ENCODE measurements at regions of chr5 and their contacts with region 1.

Region 1: DNA sequence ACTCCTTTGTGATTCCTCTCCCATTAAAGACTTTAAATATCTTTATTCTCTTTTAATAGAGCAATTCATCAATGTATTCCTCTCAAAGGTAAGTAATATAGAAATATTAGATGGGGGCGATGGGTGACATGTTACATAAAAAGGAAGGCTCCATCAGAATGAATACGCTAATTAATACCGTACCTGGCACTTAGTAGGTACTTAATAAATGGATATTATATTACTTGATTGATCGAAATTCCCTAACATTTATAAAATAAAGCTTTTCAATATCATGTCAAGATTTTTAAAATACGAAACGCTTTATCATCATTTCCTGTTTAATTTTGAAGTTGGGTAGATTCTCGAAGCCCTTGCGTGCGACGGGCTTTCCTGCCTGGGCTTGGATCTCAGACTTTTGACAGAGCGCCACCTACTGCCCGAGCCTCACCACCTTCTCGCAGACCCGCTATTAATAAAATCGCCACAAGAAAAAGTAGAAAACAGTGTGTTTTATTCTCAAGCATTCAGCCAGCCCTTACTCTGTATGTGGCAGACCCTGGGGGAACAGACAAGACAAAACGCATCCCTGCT is 99.4 kb downstream of the C5orf15 start:
- DNase-seq: peak; percentile 70 to 88
- ATAC-seq: peak; percentile 79 to 92 (median 83)
- H3K4me3 ChIP-seq: peak overlapping the region; percentile 56
- H3K27ac ChIP-seq: peak overlapping the region; percentile 61
- H3K4me1 ChIP-seq: peaks cover 6% of the 10 kb centered on the region
- H3K27me3 ChIP-seq: no peaks in the 10 kb centered on the region
- CTCF ChIP-seq: peak; percentile 78

Region 2: DNA sequence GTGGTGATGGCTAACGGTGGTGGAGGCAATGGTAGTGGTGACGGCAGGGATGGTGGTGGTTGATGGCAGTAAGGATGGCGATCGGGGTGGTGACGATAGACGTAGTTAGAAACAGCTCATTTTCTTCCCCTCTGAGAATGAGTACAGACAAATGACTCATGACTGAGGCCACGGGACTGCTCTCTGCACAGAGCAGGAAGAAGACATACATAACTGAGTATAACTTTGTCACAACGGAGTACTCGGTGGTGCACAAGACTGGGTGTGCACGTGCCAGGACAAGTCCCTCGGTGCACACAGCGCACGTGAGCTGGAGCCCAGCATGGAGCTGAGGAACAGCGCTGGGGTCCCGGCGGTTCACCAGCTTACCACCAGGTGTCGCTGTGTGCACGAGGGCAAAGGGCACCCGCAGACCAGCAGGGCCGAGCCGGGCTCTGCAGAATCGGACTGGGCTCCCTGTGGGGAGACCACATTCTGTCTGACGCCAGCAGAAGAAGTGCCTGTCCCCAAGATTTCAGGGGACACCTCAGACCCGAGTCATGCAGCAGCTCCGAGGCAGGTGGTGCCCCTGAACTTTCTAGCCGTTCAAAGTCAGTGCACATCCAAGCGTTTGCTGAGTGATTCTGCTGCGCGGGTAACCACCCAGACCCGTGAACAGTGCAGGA is 445.3 kb before region 1 on chr5:
- intact Hi-C with region 1: loop called (anchors 5 to 10 kb)
- DNase-seq: peak; percentile 65 to 83
- ATAC-seq: peak; percentile 77 to 90 (median 85)
- H3K4me3 ChIP-seq: no peak overlapping the region
- H3K27ac ChIP-seq: no peak overlapping the region
- H3K4me1 ChIP-seq: no peaks in the 10 kb centered on the region
- H3K27me3 ChIP-seq: no peaks in the 10 kb centered on the region
- CTCF ChIP-seq: peak; percentile 89

Region 3: DNA sequence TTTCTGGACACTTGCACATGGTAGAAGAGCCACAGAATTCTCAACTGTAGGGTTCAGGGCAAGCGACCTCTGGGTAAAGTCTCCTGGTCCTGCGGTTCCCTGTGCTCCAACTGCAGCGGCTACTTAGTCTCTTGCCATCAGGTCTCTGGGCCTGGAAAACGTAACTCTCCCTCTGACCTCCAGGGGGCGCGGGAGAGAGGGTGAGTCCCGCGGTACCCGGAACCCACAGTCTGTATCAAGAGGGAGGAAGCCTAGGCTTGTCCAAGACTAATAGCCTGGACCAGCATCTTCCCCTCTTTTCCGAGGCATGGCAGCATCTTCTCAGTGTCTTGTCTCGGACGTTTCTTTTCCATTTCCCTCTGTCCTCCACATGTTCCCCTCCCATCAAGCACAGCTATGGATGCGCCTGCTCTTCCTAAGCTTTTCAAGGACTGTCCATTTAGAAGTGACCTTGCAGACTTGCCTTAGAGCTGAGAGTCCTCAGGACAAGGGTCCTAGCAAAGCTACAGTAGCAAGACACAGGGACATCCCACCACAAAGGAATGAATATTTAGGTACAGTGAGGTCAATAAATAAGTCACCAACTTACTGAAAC is 316.0 kb before region 1 on chr5:
- intact Hi-C with region 1: loop called in 1 of 2 experiments (anchors 10 kb)
- DNase-seq: peak; percentile 34 to 57
- ATAC-seq: peak in 3 of 4 donors; percentile 43 to 61 (median 55)
- H3K4me3 ChIP-seq: no peak overlapping the region
- H3K27ac ChIP-seq: no peak overlapping the region
- H3K4me1 ChIP-seq: no peaks in the 10 kb centered on the region
- H3K27me3 ChIP-seq: peaks cover 2 to 33% (median 5%) of the 10 kb centered on the region in 3 donors
- CTCF ChIP-seq: peak; percentile 53

Region 4: GRCh38 chr5:133727636-133728035 is 141.4 kb before region 1 on chr5:
- intact Hi-C with region 1: no loop called
- DNase-seq: no peak
- ATAC-seq: no peak
- H3K4me3 ChIP-seq: no peak overlapping the region
- H3K27ac ChIP-seq: no peak overlapping the region
- H3K4me1 ChIP-seq: no peaks in the 10 kb centered on the region
- H3K27me3 ChIP-seq: no peaks in the 10 kb centered on the region
- CTCF ChIP-seq: no peak

Region 5: DNA sequence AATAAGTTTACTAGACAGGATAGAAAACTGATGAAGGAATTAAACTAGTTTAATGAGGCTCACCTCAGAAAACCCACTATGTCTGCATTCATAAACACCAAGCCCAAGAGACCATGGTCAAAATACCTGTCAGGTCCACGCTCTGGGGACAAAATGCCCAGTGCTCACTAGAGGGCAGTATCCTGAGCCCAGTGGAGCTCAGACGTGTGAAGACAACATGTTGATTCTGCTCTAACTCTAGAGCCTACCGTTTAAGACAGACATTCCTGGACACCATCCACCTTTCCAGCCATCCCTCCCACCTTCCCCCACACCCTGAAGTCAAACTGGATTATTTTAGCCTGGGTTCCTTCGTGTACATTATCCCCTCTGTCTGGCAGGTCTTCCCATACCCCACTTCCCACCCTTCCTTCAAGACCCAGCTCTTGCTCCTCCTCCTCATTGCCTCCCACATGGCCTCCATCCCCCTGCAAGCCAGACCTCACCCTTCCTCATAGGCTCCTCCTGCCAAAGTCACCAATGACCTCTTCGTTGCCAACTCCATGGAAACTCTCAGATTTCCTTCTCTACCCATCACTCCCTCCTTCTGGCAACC is 114.4 kb before region 1 on chr5:
- intact Hi-C with region 1: loop called (anchors 2 kb)
- DNase-seq: no peak
- ATAC-seq: peak; percentile 79 to 90 (median 80)
- H3K4me3 ChIP-seq: no peak overlapping the region
- H3K27ac ChIP-seq: no peak overlapping the region
- H3K4me1 ChIP-seq: no peaks in the 10 kb centered on the region
- H3K27me3 ChIP-seq: peaks cover 0 to 9% (median 0%) of the 10 kb centered on the region in 3 donors
- CTCF ChIP-seq: peak; percentile 59

Region 6: GRCh38 chr5:133773247-133774202 is 95.5 kb before region 1 on chr5:
- intact Hi-C with region 1: loop called in 1 of 2 experiments (anchors 2 kb)
- DNase-seq: no peak
- ATAC-seq: peak; percentile 56 to 91 (median 71)
- H3K4me3 ChIP-seq: no peak overlapping the region
- H3K27ac ChIP-seq: peak overlapping the region; percentile 67
- H3K4me1 ChIP-seq: peaks cover 5% of the 10 kb centered on the region
- H3K27me3 ChIP-seq: no peaks in the 10 kb centered on the region
- CTCF ChIP-seq: peak; percentile 24

Region 7: GRCh38 chr5:134132372-134133034 is 263.5 kb after region 1 on chr5:
- intact Hi-C with region 1: no loop called
- DNase-seq: peak in 1 of 2 donors; percentile 43
- ATAC-seq: no peak
- H3K4me3 ChIP-seq: no peak overlapping the region
- H3K27ac ChIP-seq: no peak overlapping the region
- H3K4me1 ChIP-seq: peaks cover 15% of the 10 kb centered on the region
- H3K27me3 ChIP-seq: no peaks in the 10 kb centered on the region
- CTCF ChIP-seq: no peak

Measured in psoas muscle (tissue), 8 donors.